ENCODE measurements at regions of chr14 and their contacts with region 1.

Region 1: GRCh38 chr14:32576088-32576795 is 247.1 kb downstream of the AKAP6 start:
- DNase-seq: peak; percentile 45 to 81 (median 55)
- H3K4me3 ChIP-seq: peak overlapping the region in 1 of 4 donors; percentile 37
- H3K27ac ChIP-seq: no peak overlapping the region
- H3K4me1 ChIP-seq: no peaks in the 10 kb centered on the region
- H3K27me3 ChIP-seq: no peaks in the 10 kb centered on the region
- CTCF ChIP-seq: peak; percentile 87 to 96 (median 94)
- POLR2A ChIP-seq: no peak

Region 2: DNA sequence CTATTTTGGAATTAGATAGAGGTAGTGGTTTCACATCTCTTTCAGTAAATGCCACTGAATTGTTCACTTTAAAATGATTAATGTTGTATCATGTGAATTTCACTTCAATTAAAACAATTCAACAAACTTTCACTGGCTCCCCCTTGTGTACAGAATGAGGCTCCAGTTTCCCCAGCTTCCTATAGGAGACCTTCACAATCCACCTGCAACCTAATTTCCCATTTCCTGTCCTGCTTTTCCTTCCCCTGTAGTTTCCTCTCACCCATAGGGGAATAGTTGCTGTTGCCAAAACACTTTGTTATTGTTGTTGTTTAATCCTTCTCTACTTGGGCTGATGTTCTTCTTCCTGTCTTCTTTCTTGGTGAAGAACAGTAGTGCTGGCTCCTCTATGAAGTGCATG is 422.2 kb after region 1 on chr14:
- intact Hi-C with region 1: loop called in 1 of 2 experiments (anchors 10 kb)
- DNase-seq: peak in 3 of 7 donors; percentile 9 to 24 (median 24)
- H3K4me3 ChIP-seq: no peak overlapping the region
- H3K27ac ChIP-seq: no peak overlapping the region
- H3K4me1 ChIP-seq: no peaks in the 10 kb centered on the region
- H3K27me3 ChIP-seq: no peaks in the 10 kb centered on the region
- CTCF ChIP-seq: peak; percentile 16 to 57 (median 42)
- POLR2A ChIP-seq: no peak

Region 3: DNA sequence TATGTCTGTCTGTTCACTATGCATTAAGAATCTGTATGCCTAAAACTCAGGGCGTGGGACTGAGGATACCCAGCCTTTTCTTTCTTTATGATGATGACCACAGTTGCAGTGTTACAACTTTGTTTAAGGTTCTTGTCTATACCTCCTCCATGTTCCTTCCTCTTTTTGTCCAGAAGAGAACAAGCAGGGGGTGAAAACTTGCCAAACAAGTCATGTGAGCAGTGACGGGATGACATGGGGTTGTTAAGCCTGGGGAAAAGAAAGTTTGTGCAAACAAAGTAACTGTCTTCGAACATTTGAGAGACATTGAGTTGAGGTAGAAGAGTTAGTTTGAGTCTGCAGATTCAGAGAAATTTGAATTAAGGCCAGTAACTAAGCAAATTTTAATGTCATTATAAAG is 867.9 kb after region 1 on chr14:
- intact Hi-C with region 1: loop called in 1 of 2 experiments (anchors 10 kb)
- DNase-seq: peak in 1 of 7 donors; percentile 10
- H3K4me3 ChIP-seq: no peak overlapping the region
- H3K27ac ChIP-seq: no peak overlapping the region
- H3K4me1 ChIP-seq: no peaks in the 10 kb centered on the region
- H3K27me3 ChIP-seq: no peaks in the 10 kb centered on the region
- CTCF ChIP-seq: no peak
- POLR2A ChIP-seq: no peak

Region 4: DNA sequence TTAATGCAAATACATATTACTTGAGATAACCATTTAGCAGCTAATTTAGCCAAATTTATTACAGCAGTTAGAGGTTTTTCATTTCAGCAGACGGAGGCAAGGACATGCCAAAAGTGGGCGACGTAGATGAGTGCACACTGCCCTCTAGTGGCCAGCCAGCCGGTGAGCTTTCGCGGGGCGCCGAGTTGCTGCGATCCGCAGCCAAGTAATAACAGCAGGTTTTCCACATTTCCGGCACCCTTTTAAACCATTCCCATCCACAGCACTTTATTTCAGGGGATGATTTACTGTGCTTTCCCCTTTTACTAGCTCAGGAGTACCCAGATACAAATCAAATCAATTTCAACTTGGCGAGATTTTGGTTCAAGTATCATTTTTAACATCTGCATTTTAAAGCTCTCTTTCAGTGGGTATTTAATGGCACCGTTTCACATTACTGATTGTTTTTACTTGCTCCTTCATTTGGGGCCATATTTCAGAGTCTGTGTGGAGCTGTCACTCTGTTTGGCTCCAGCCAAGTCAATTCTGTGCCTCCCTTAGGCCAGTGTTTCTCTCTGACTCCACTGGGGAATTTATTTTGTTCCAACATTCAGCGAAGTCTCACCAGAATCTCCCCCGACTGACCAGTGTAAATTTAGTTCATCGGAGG is 1216.6 kb after region 1 on chr14:
- intact Hi-C with region 1: loop called in 1 of 2 experiments (anchors 5 kb)
- DNase-seq: peak; percentile 72 to 90 (median 82)
- H3K4me3 ChIP-seq: peak overlapping the region in 1 of 4 donors; percentile 12
- H3K27ac ChIP-seq: no peak overlapping the region
- H3K4me1 ChIP-seq: peaks cover 5 to 16% of the 10 kb centered on the region in 2 donors
- H3K27me3 ChIP-seq: no peaks in the 10 kb centered on the region
- CTCF ChIP-seq: peak; percentile 81 to 96 (median 88)
- POLR2A ChIP-seq: no peak

Region 5: GRCh38 chr14:34322940-34323418 is 1746.7 kb after region 1 on chr14:
- intact Hi-C with region 1: loop called in 1 of 2 experiments (anchors 10 kb)
- DNase-seq: peak; percentile 38 to 71 (median 53)
- H3K4me3 ChIP-seq: no peak overlapping the region
- H3K27ac ChIP-seq: no peak overlapping the region
- H3K4me1 ChIP-seq: no peaks in the 10 kb centered on the region
- H3K27me3 ChIP-seq: no peaks in the 10 kb centered on the region
- CTCF ChIP-seq: peak; percentile 32 to 74 (median 58)
- POLR2A ChIP-seq: no peak

Measured in adrenal gland (tissue), 19 donors.